Activated CD4-positive, alpha-beta memory T cell treated with anti-CD3 and anti-CD28 coated beads for 36 hours (primary cell): ENCODE measurements at regions of chr4 and their contacts with region 1.

Region 1: GRCh38 chr4:102525097-102525496 is 23.9 kb downstream of the NFKB1 start:
- DNase-seq: no peak
- H3K4me3 Mint-ChIP-seq: no peak overlapping the region
- H3K27ac Mint-ChIP-seq: peak overlapping the region; percentile 73
- H3K4me1 Mint-ChIP-seq: peaks cover 88% of the 10 kb centered on the region
- H3K27me3 Mint-ChIP-seq: no peaks in the 10 kb centered on the region

Region 2: GRCh38 chr4:102535398-102536082 is 10.4 kb after region 1 on chr4:
- CTCF ChIA-PET with region 1: interaction called, 6 read pairs
- POLR2A ChIA-PET with region 1: no interaction called
- intact Hi-C with region 1: loop called (anchors 1 kb)
- DNase-seq: no peak
- H3K4me3 Mint-ChIP-seq: no peak overlapping the region
- H3K27ac Mint-ChIP-seq: no peak overlapping the region
- H3K4me1 Mint-ChIP-seq: peaks cover 53% of the 10 kb centered on the region
- H3K27me3 Mint-ChIP-seq: no peaks in the 10 kb centered on the region

Region 3: GRCh38 chr4:102637391-102637790 is 112.3 kb after region 1 on chr4:
- CTCF ChIA-PET with region 1: no interaction called
- POLR2A ChIA-PET with region 1: no interaction called
- intact Hi-C with region 1: no loop called
- DNase-seq: no peak
- H3K4me3 Mint-ChIP-seq: no peak overlapping the region
- H3K27ac Mint-ChIP-seq: no peak overlapping the region
- H3K4me1 Mint-ChIP-seq: peaks cover 21% of the 10 kb centered on the region
- H3K27me3 Mint-ChIP-seq: no peaks in the 10 kb centered on the region

Region 4: GRCh38 chr4:102687373-102687981 is 162.4 kb after region 1 on chr4:
- CTCF ChIA-PET with region 1: no interaction called
- POLR2A ChIA-PET with region 1: no interaction called
- intact Hi-C with region 1: no loop called
- DNase-seq: no peak
- H3K4me3 Mint-ChIP-seq: no peak overlapping the region
- H3K27ac Mint-ChIP-seq: no peak overlapping the region
- H3K4me1 Mint-ChIP-seq: no peaks in the 10 kb centered on the region
- H3K27me3 Mint-ChIP-seq: no peaks in the 10 kb centered on the region

Region 5: GRCh38 chr4:102760645-102761295 is 235.7 kb after region 1 on chr4 and contains the start of gene MANBA:
- CTCF ChIA-PET with region 1: no interaction called
- POLR2A ChIA-PET with region 1: no interaction called
- intact Hi-C with region 1: no loop called
- DNase-seq: peak; percentile 91
- H3K4me3 Mint-ChIP-seq: peak within 1 kb of the TSS; percentile 97
- H3K27ac Mint-ChIP-seq: peak within 1 kb of the TSS; percentile 82
- H3K4me1 Mint-ChIP-seq: peaks cover 36% of the 10 kb centered on the region
- H3K27me3 Mint-ChIP-seq: no peaks in the 10 kb centered on the region
- total RNA-seq, gene MANBA: 10.2 to 10.7 TPM